BJ (cell line): ENCODE measurements at regions of chr15 and their contacts with region 1.

Region 1: DNA sequence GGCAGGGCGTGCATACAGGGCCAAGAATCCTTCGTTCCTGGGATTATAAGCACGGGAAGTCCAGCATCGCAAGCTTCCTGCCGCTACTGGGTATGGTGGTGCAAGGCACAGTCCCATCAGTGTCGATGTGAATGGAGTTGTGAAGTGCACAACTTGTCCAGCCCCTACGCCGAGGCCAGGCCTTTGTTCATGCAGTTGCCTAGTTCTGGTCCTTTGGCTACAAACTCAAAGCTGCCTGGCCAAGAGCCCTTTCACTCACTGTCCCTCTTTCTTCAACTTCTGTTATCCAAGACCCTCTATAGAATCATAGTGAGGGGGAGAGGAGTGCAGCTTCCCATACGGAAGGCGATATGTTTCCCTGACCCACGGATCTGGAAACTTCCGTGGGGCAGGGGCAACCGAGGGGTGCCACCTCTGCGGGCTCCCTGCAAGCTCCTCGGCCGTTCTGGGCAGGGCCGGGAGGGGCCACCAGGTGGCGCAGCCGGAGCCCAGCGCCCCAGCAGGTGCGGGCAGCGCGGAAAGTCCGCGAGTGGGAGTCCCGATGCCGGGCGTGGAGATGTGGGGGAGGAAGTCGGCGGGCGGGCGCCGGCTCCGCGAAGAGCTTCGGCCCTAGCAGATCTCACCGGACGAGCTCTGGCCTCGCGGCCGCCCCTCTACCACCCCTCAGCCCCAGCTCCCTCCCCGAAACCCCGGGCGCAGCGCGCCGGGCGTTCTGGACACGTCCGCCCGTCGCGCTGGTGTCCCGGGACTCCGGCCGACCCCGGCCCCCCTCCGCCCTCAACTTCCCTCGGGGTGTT is 693 bp downstream of the RASGRP1 start:
- DNase-seq: no peak
- H3K4me3 ChIP-seq: peak overlapping the region; percentile 64
- H3K27me3 ChIP-seq: peaks cover 9% of the 10 kb centered on the region
- CTCF ChIP-seq: peak; percentile 84

Region 2: GRCh38 chr15:38440353-38441129 is 123.4 kb before region 1 on chr15:
- CTCF ChIA-PET with region 1: interaction called, 20 read pairs
- POLR2A ChIA-PET with region 1: no interaction called
- DNase-seq: no peak
- H3K4me3 ChIP-seq: no peak overlapping the region
- H3K27me3 ChIP-seq: peaks cover 8% of the 10 kb centered on the region
- CTCF ChIP-seq: peak; percentile 92

Region 3: GRCh38 chr15:38479266-38479665 is 84.7 kb before region 1 on chr15:
- CTCF ChIA-PET with region 1: interaction called, 10 read pairs
- POLR2A ChIA-PET with region 1: no interaction called
- DNase-seq: no peak
- H3K4me3 ChIP-seq: no peak overlapping the region
- H3K27me3 ChIP-seq: no peaks in the 10 kb centered on the region
- CTCF ChIP-seq: no peak

Region 4: GRCh38 chr15:38521316-38521715 is 42.6 kb before region 1 on chr15:
- CTCF ChIA-PET with region 1: interaction called, 10 read pairs
- POLR2A ChIA-PET with region 1: no interaction called
- DNase-seq: no peak
- H3K4me3 ChIP-seq: no peak overlapping the region
- H3K27me3 ChIP-seq: no peaks in the 10 kb centered on the region
- CTCF ChIP-seq: no peak

Region 5: DNA sequence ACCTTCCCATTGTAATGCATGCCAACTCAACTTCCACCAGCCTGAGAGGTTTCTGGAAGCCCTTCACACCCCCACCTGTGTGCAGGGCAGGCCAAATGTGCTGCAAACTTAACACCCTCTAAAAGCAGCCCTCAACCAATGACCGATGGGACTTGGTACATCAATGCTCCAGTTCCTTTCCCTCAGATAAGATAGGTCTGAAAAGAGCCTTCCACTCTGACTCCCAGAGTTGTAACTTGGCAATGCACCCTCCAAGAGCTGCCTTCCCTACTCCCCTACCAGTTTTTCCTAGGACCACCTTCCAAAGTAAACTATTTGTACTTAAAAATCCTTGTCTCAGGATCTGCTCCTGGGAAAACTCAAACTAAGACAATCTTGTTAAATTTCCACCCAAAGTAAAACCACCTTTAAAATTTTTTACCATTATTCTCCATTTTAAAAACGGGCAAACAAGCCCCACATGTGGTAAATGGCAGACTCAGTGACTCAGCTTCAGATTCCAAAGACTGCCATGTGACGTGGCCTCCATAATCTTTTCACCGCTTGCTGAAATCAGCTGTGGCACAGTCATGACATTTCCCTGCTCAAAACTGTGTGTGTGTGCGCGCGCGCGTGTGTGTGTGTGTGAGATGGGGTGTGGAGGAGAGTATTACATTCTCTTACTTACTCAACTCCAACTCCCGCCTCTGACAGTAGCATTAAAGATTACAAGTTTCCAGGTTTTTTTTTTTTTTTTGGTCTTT is 16.5 kb before region 1 on chr15:
- CTCF ChIA-PET with region 1: interaction called, 37 read pairs
- POLR2A ChIA-PET with region 1: no interaction called
- DNase-seq: no peak
- H3K4me3 ChIP-seq: no peak overlapping the region
- H3K27me3 ChIP-seq: no peaks in the 10 kb centered on the region
- CTCF ChIP-seq: no peak

Region 6: DNA sequence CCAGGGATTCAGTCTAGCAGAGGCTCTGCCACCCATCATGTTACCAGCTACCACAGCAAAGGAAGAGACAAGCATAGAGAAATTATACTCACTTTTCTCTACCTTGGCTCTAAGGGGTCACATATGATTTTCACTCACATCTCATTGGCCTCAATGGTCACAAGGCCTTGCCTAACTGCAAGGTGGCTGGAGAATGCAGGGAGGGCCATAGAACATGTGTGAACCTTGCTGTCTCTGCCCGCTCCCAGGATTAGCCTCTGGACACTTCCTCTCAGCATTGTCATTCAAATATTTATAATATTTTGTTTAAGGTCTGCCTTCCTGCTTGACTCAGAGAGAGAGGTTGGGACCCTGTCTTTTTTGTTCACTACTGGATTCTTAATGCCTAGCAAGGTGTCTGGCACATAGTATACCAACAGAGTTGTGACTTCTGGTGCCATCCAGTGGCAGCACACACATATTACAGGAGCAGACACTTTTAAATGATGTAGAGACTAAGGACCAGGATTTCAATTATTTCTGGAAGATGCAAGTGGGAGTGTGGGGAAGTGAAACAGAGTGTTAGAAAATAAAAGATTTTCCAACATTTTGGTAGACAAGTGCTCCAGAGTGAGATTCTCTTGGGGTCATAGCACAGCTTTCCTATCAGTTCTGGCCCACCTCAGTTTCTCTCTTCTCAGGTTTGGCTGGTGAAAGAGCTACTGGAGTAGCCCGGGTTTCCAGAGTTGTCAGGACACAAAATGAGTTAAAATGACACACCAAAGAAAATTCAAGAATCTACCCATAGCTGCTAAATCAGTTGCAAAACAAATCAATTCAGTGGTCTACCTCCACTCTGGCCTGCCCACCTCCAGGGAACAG is 119.7 kb after region 1 on chr15:
- CTCF ChIA-PET with region 1: interaction called, 26 read pairs
- POLR2A ChIA-PET with region 1: no interaction called
- DNase-seq: no peak
- H3K4me3 ChIP-seq: no peak overlapping the region
- H3K27me3 ChIP-seq: no peaks in the 10 kb centered on the region
- CTCF ChIP-seq: peak; percentile 78

Region 7: DNA sequence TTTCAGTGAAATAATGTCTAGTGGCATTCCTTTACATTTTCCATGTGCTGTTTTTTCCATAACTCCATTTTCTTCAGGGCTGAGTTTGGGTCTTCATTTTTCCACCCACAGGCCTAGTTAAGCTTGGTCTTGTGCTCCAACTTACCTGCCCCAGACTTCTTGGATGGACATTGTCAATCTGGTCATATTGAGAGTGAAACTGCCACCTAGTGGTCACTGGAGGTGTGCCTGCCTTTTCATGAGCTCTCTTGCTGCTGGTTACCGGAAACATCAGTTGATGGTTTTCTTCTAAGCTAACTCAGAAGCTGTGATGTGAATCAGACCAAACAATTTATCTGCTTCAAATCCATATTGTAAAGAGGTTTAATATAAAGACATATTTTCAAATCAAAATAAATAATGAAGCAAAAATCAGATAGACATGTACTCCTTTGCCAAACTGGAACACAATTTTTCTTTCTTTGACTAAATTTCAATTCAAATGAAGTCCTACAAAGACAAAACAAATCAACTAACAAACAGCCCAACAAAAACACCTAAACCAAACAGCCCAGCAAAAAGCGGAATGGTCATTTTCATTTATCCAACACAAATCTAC is 135.8 kb after region 1 on chr15:
- CTCF ChIA-PET with region 1: interaction called, 16 read pairs
- POLR2A ChIA-PET with region 1: no interaction called
- DNase-seq: no peak
- H3K4me3 ChIP-seq: no peak overlapping the region
- H3K27me3 ChIP-seq: no peaks in the 10 kb centered on the region
- CTCF ChIP-seq: peak; percentile 90